ENCODE measurements at regions of chr3 and their contacts with region 1.

Region 1: GRCh38 chr3:49454458-49454857 is 15.6 kb upstream of the DAG1 start:
- DNase-seq: peak; percentile 52
- ATAC-seq: peak; percentile 93
- H3K4me3 ChIP-seq: no peak overlapping the region
- H3K27ac ChIP-seq: no peak overlapping the region
- H3K4me1 ChIP-seq: peaks cover 0 to 24% of the 10 kb centered on the region in 2 experiments; a peak in 2 of 4 replicates
- H3K27me3 ChIP-seq: no peaks in the 10 kb centered on the region
- CTCF ChIP-seq: peak; percentile 51 to 74 (median 54); a peak in 5 of 6 replicates
- POLR2A ChIP-seq: no peak
- RAD21 ChIP-seq: peak; percentile 90

Region 2: GRCh38 chr3:48989796-48990635 is 464.4 kb before region 1 on chr3 and contains the start of gene P4HTM:
- CTCF ChIA-PET with region 1: interaction called, 15 read pairs
- POLR2A ChIA-PET with region 1: no interaction called
- RAD21 ChIA-PET with region 1: interaction called in 1 of 2 experiments, 3 read pairs
- intact Hi-C with region 1: loop called (anchors 1 kb)
- DNase-seq: peak; percentile 72
- ATAC-seq: peak; percentile 77
- H3K4me3 ChIP-seq: peak within 1 kb of the TSS; percentile 76 to 80
- H3K27ac ChIP-seq: peak within 1 kb of the TSS; percentile 98
- H3K4me1 ChIP-seq: peaks cover 23 to 27% of the 10 kb centered on the region in 2 experiments
- H3K27me3 ChIP-seq: no peaks in the 10 kb centered on the region
- CTCF ChIP-seq: peak; percentile 20 to 24 (median 24); a peak in 3 of 6 replicates
- POLR2A ChIP-seq: peak; percentile 85
- RAD21 ChIP-seq: 0 out of 2 replicates have a peak, but pooled peaks have one; percentile 30
- total RNA-seq, gene P4HTM: 60.5 TPM

Region 3: DNA sequence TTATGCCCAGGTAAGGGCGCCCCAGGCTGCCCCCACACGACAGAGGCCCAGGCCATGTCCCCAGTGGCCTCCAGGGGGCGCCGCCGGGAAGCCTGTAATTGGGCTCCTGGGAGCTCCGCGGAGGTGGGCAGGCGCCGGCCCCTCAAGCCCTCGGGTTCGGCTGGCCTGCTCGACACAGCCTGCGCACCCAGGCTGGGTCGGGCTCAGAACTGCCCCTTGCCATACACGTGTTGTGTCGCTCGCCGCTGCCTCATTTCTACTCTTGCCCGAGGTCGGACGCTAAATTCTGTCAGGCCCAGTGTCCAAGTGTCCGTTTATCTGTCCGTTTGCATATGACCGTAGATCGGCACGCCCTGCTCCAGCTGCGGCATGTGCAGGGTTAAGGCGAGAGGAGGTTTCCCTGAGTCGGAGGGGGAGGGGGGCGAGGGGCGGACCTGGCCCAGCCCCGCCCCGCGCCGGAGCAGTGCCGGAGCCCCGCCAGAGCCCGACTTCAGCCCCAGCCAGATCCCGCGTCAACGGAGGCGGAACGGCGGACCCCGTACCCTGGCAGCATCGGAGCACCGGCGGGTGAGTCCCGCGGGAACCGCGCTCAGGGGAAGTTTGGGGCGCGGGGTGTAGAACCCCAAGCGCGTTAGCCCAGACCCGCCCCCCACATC is 283.2 kb before region 1 on chr3 and contains the start of gene KLHDC8B:
- CTCF ChIA-PET with region 1: interaction called, 18 read pairs
- POLR2A ChIA-PET with region 1: no interaction called
- RAD21 ChIA-PET with region 1: no interaction called
- intact Hi-C with region 1: loop called (anchors 1 kb)
- DNase-seq: peak; percentile 54
- ATAC-seq: peak; percentile 90
- H3K4me3 ChIP-seq: peak within 1 kb of the TSS; percentile 57 to 74
- H3K27ac ChIP-seq: peak within 1 kb of the TSS; percentile 58
- H3K4me1 ChIP-seq: peaks cover 18 to 45% of the 10 kb centered on the region in 2 experiments
- H3K27me3 ChIP-seq: no peaks in the 10 kb centered on the region
- CTCF ChIP-seq: peak in 2 of 3 experiments; percentile 91 to 97; a peak in 4 of 6 replicates
- POLR2A ChIP-seq: peak; percentile 36
- RAD21 ChIP-seq: no peak
- total RNA-seq, gene KLHDC8B: 10.4 TPM

Region 4: DNA sequence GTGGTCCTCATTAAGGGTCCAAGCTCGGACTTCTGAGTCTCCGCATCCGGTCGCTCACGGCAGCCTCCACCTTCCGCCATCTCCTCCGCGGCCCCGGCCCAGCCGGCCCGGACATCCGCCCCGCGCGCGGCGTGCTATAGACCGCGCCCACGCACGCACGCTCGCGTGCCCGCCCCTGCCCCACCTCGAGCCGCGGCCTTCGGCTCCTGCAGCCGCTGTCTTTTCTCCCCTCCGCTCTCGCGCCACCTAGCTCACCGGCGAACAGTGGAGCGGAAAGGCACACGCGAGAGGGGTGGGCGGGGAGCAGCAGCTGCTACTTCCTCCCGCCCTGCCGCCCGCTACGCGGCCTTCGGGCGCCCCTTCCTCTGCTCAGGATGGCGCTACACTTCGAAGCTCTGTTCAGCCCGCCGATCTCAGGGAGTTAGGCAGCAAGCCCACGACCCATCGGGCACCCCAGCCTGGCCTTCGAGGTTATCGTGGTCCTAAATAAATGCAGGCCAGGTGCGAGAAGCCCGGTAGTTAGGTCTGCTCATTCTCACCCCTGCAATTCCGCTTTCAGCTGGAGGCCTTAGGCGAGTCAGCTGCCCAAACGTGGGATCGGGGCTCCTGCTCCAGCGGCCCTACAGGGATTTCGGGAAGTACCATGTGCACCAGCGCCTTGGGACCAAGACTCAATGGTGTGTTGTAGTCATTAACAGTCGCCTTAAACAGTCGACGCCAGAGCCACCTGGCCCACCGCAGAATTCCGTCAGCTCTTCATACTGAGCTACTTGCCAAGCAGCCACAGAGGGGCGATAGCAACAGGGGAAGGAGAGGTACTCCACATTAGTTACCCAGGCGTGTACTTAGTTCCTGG is 114.3 kb before region 1 on chr3 and contains the start of gene USP4:
- CTCF ChIA-PET with region 1: interaction called, 25 read pairs
- POLR2A ChIA-PET with region 1: interaction called, 7 read pairs
- RAD21 ChIA-PET with region 1: interaction called, 3 to 8 read pairs
- intact Hi-C with region 1: no loop called
- DNase-seq: peak; percentile 71
- ATAC-seq: peak; percentile 96
- H3K4me3 ChIP-seq: peak within 1 kb of the TSS; percentile 62 to 94
- H3K27ac ChIP-seq: peak within 1 kb of the TSS; percentile 73
- H3K4me1 ChIP-seq: peaks cover 8 to 20% of the 10 kb centered on the region in 2 experiments; a peak in 3 of 4 replicates
- H3K27me3 ChIP-seq: no peaks in the 10 kb centered on the region
- CTCF ChIP-seq: peak; percentile 30 to 37 (median 32); a peak in 5 of 6 replicates
- POLR2A ChIP-seq: peak; percentile 62
- RAD21 ChIP-seq: peak; percentile 60
- total RNA-seq, gene USP4: 31.7 TPM

Region 5: DNA sequence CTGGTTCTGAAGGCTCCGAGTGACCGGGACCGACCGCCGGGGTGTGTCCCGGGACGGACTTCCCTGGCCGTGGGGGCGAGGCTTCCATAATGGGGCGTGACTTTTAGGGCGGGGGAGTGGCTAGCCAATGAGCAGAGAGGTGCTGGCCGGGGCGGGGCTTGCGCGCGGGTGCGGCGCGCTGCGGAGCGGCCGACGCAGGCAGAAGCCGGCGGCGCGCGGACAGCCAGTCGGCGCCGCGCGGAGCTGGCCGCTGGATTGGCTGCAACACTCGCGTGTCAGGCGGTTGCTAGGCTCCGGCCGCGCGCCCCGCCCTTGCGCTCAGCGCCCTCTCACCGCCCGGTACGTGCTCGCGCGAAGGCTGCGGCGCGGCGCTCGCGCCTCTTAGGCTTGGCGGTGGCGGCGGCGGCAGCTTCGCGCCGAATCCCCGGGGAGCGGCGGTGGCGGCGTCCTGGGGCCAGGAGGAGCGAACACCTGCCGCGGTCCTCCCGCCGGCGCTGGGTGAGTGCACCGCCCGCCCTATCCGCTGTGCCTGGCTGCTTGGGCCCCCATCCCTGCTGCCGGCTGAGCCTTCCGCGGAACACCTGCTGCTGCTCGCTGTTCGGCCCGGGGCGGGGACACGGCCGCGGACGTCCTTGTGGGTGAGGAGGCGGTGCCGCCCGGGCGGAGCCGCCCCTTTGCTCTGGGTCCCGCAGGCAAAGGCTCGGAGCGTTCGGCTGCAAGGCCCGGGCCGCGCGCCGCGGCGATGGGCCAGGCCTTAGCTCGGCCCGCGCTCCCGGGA is 15.7 kb after region 1 on chr3 and contains the start of gene DAG1:
- CTCF ChIA-PET with region 1: interaction called, 10 read pairs
- POLR2A ChIA-PET with region 1: interaction called, 12 read pairs
- RAD21 ChIA-PET with region 1: interaction called, 3 to 4 read pairs
- intact Hi-C with region 1: no loop called
- DNase-seq: peak; percentile 90
- ATAC-seq: peak; percentile 87
- H3K4me3 ChIP-seq: peak within 1 kb of the TSS; percentile 70 to 92
- H3K27ac ChIP-seq: peak within 1 kb of the TSS; percentile 95
- H3K4me1 ChIP-seq: peaks cover 35 to 46% of the 10 kb centered on the region in 2 experiments
- H3K27me3 ChIP-seq: no peaks in the 10 kb centered on the region
- CTCF ChIP-seq: no peak
- POLR2A ChIP-seq: peak; percentile 75
- RAD21 ChIP-seq: no peak
- total RNA-seq, gene DAG1: 99.9 TPM

Region 6: DNA sequence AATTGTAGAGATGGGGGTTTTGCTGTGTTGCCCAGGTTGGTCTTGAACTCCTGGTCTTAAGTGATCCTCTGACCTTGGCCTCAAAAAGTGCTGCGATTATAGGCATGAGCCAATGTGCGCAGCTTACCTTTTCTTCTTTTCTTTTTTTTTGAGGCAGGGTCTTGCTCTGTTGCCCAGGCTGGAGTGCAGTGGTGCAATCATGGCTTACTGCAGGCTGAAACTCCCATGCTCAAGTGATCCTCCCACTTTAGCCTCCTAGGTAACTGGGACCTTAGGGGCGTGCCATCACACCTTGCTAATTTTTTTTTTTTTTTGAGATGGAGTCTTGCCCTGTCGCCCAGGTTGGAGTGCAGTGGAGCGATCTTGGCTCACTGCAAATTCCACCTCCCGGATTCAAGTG is 498.5 kb after region 1 on chr3:
- CTCF ChIA-PET with region 1: no interaction called
- POLR2A ChIA-PET with region 1: no interaction called
- RAD21 ChIA-PET with region 1: no interaction called
- intact Hi-C with region 1: no loop called
- DNase-seq: no peak
- ATAC-seq: no peak
- H3K4me3 ChIP-seq: no peak overlapping the region
- H3K27ac ChIP-seq: no peak overlapping the region
- H3K4me1 ChIP-seq: peaks cover 21 to 26% of the 10 kb centered on the region in 2 experiments
- H3K27me3 ChIP-seq: no peaks in the 10 kb centered on the region
- CTCF ChIP-seq: no peak
- POLR2A ChIP-seq: no peak
- RAD21 ChIP-seq: no peak

Measured in HCT116 (cell line).